ENCODE measurements at regions of chr3 and their contacts with region 1.

Region 1: GRCh38 chr3:25664810-25665314 is at the start of gene TOP2B:
- DNase-seq: peak; percentile 98
- H3K4me3 ChIP-seq: peak within 1 kb of the TSS; percentile 80 to 85
- H3K27ac ChIP-seq: peak within 1 kb of the TSS; percentile 96 to 97
- H3K4me1 ChIP-seq: no peaks in the 10 kb centered on the region
- H3K27me3 ChIP-seq: no peaks in the 10 kb centered on the region
- CTCF ChIP-seq: no peak
- POLR2A ChIP-seq: peak; percentile 99
- total RNA-seq, gene TOP2B: 85.3 to 109 TPM

Region 2: DNA sequence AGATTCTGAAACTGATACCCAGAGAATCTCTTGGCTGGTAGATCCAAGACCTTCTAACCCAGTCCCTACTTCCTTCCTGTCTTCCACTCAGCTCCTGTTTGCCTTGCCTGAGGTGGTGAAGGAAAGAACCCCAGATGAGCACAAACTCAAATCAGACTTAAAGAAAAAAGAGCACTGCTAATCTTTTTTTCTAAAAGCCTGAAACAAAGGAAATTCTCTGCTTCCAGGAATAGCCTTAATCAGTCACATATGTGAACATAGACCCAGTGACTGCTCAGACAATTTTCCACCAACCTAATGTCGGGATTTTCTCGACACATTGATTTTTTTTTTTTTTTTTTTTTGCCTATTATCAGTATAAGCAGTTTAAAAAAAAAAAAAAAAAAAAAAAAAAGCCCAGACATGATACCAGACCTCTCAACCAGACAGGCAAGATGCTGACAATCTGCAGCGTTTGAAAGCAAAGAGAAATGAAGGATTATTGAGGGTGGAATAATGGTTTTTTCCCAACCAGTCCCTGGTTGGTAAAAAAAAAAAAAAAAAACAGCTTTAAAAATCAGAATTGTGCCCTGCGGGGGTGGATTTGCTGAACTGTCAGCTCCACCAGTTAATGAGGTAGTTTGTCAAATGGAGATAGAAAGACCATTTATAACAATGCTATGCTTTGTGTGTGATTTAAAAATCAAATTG is 493.6 kb before region 1 on chr3:
- intact Hi-C with region 1: no loop called
- DNase-seq: no peak
- H3K4me3 ChIP-seq: no peak overlapping the region
- H3K27ac ChIP-seq: no peak overlapping the region
- H3K4me1 ChIP-seq: no peaks in the 10 kb centered on the region
- H3K27me3 ChIP-seq: no peaks in the 10 kb centered on the region
- CTCF ChIP-seq: no peak
- POLR2A ChIP-seq: no peak

Region 3: DNA sequence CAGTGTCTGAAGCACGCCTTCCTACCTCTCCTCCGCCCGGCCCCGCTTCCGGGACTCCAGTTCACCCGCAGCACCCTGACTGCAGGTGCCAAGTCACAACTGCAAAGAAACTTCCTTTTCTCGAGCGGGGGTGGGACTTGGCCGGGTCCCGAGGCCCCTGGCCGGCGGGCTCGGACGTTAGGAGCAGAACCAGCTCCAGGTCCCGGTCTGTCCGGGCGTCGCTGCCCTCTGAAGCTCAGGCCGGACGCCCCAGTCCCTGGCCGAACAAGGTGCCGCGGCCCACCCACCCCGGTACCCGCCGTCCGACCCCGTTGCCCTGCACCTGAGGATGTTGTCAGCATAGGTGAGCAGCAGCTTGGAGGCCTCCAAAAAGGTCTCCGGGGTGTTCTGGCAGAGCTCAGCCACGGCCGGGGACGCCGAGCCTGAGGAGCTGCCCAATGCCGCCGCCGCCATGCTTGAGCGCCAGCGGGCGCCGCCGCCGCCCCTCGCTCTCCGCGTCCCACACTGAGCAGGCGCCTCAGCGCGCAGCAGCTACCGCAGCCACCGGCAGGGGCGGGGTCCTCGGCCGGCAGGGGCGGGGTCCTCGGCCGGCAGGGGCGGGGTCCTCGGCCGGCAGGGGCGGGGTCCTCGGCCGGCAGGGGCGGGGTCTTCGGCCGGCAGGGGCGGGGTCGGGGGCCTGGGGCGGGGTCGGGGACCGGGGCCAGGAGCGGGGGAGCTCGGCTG is 118.2 kb after region 1 on chr3 and contains the start of gene NGLY1:
- intact Hi-C with region 1: loop called (anchors 2 kb)
- DNase-seq: peak; percentile 86
- H3K4me3 ChIP-seq: peak within 1 kb of the TSS; percentile 83 to 95
- H3K27ac ChIP-seq: peak within 1 kb of the TSS; percentile 85 to 90
- H3K4me1 ChIP-seq: no peaks in the 10 kb centered on the region
- H3K27me3 ChIP-seq: no peaks in the 10 kb centered on the region
- CTCF ChIP-seq: peak; percentile 15 to 68 (median 36)
- POLR2A ChIP-seq: peak; percentile 94
- total RNA-seq, gene NGLY1: 35.6 to 36.8 TPM

Region 4: DNA sequence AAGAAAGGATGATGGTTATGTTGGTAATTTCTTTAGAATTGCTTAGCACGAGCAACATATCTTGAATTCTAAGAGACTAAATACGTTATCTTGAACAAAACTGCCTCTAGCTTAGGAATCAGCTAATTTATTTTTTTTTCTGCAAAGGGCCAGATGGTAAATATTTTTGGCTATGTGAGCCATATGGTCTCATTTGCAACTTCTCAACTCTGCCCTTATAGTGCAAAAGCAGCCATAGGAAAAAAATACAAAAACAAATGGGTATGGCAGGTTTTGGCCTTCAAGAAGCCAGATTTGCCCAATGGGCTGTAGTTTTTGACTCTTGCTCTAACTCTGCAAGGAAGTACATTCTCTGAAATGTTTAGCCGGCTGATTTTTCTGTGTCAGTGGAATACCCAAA is 136.9 kb after region 1 on chr3:
- intact Hi-C with region 1: no loop called
- DNase-seq: no peak
- H3K4me3 ChIP-seq: no peak overlapping the region
- H3K27ac ChIP-seq: no peak overlapping the region
- H3K4me1 ChIP-seq: no peaks in the 10 kb centered on the region
- H3K27me3 ChIP-seq: no peaks in the 10 kb centered on the region
- CTCF ChIP-seq: no peak
- POLR2A ChIP-seq: no peak

Region 5: GRCh38 chr3:26058901-26059321 is 394.0 kb after region 1 on chr3:
- intact Hi-C with region 1: no loop called
- DNase-seq: no peak
- H3K4me3 ChIP-seq: no peak overlapping the region
- H3K27ac ChIP-seq: no peak overlapping the region
- H3K4me1 ChIP-seq: no peaks in the 10 kb centered on the region
- H3K27me3 ChIP-seq: no peaks in the 10 kb centered on the region
- CTCF ChIP-seq: no peak
- POLR2A ChIP-seq: no peak

Measured in prostate gland (tissue), 2 donors.